Gastrocnemius medialis (tissue), 4 donors: ENCODE measurements at regions of chr1 and their contacts with region 1.

Region 1: GRCh38 chr1:86704458-86704971 is at the start of gene SH3GLB1:
- DNase-seq: peak; percentile 73 to 85
- ATAC-seq: peak; percentile 74 to 75
- H3K4me3 ChIP-seq: peak within 1 kb of the TSS; percentile 70 to 89 (median 83)
- H3K27ac ChIP-seq: peak within 1 kb of the TSS; percentile 91 to 98 (median 97)
- H3K4me1 ChIP-seq: peaks cover 37 to 39% of the 10 kb centered on the region in 2 donors
- H3K27me3 ChIP-seq: no peaks in the 10 kb centered on the region
- CTCF ChIP-seq: peak; percentile 91 to 99 (median 95)
- POLR2A ChIP-seq: peak; percentile 79
- total RNA-seq, gene SH3GLB1: 76.6 to 168 (median 112) TPM

Region 2: GRCh38 chr1:86714561-86715244 is 10.2 kb after region 1 on chr1:
- in situ Hi-C with region 1: no loop called
- intact Hi-C with region 1: loop called (anchors 2 kb)
- DNase-seq: no peak
- ATAC-seq: peak; percentile 68 to 69
- H3K4me3 ChIP-seq: peak overlapping the region in 3 of 4 donors; percentile 6 to 27 (median 20)
- H3K27ac ChIP-seq: peak overlapping the region; percentile 91 to 98 (median 97)
- H3K4me1 ChIP-seq: peaks cover 86 to 99% of the 10 kb centered on the region in 2 donors
- H3K27me3 ChIP-seq: no peaks in the 10 kb centered on the region
- CTCF ChIP-seq: no peak
- POLR2A ChIP-seq: no peak

Region 3: DNA sequence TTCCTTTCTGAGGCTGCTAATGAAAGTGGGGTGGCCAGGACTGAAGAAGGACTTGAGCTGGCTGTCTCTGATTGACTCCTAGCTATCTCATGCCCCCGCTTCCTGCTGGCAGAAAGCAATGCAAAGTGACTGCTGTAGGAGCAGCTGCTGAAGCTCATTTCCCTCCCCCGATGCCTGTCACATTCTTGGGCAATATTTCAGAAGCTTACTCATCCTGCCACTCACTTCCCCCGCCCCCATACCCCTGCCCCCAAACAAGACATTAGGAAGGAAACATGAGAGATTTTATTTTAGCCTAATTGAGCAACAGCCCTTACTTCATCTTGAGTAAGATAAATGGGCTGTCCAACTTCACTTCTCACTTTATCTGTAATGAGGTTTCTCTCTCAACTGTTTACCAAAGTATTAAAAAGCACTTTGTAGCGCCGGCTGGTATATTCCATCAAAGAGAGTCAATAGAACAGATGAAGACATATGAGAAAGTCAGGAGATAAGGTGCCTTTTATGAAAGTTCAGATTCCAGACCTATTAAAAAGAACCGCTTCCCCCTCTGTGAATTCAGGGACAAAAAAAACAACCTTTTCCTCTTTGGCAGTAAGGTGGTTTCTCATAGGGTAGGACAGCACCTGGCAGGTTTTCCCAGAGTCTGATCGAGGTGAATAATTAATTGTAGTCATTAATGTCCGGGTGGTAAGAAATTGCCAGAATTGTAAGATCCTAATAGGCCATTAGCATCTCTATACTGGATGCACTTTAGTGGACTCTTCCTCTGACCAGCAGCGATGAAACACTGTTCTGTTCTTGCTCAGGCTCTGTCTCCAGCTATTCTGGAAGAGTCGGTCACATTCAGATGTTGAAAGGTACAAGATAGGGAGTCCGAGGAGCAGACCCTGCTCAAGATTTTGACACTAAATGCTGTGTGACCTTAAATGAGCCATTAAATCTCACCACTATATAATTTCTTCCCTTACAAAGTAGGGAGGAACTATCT is 70.1 kb after region 1 on chr1:
- in situ Hi-C with region 1: no loop called
- intact Hi-C with region 1: loop called (anchors 2 kb)
- DNase-seq: peak; percentile 85 to 95
- ATAC-seq: peak; percentile 93 to 95
- H3K4me3 ChIP-seq: peak overlapping the region; percentile 2 to 31 (median 22)
- H3K27ac ChIP-seq: peak overlapping the region; percentile 86 to 94 (median 90)
- H3K4me1 ChIP-seq: peaks cover 32 to 44% of the 10 kb centered on the region in 2 donors
- H3K27me3 ChIP-seq: no peaks in the 10 kb centered on the region
- CTCF ChIP-seq: no peak
- POLR2A ChIP-seq: peak; percentile 53 to 70

Region 4: DNA sequence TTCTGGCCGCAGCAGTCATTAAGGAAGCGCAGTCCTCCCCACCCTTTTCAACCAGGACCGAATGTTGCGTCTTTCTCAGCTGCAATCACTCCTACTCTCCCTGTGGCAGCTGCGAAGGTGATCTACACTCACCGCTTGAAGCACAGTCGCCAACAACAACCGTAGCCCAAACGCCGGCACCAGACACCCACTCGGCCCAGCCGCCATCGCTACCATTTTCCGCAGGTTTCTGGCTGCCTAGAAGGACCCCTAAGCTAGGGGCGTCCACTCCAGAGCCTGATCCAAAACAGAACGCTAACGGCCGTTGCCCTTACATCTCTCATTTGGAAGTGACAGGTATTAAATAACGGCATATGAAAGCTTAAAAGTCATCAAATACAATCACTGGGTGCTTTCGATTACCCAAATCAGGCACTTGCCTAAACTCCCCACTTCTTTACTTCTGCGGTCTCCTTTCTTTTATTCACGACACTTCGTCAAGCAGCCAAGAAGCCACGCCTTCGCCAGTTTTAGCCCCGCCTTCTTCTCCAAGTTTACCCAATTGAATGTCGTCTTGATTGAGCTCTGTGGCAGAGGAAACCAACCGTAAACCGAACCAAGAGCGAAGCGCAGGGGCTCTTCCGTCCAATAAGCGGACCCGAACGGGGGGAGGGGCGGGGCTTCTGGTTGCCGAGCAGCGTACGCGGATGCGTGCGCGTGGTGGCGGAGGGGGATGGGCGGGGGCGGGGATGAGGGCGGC is 209.6 kb after region 1 on chr1 and contains the start of gene SELENOF:
- in situ Hi-C with region 1: loop called in 2 of 4 experiments (anchors 10 to 25 kb)
- intact Hi-C with region 1: loop called (anchors 1 kb)
- DNase-seq: peak; percentile 98 to 100
- ATAC-seq: peak; percentile 97 to 98
- H3K4me3 ChIP-seq: peak within 1 kb of the TSS; percentile 76 to 99 (median 88)
- H3K27ac ChIP-seq: peak within 1 kb of the TSS; percentile 86 to 97 (median 90)
- H3K4me1 ChIP-seq: peaks cover 19 to 40% of the 10 kb centered on the region in 2 donors
- H3K27me3 ChIP-seq: no peaks in the 10 kb centered on the region
- CTCF ChIP-seq: peak in 1 of 5 experiments; percentile 23
- POLR2A ChIP-seq: peak; percentile 18 to 86
- total RNA-seq, gene SELENOF: 41.3 to 66.8 (median 47.2) TPM

Region 5: DNA sequence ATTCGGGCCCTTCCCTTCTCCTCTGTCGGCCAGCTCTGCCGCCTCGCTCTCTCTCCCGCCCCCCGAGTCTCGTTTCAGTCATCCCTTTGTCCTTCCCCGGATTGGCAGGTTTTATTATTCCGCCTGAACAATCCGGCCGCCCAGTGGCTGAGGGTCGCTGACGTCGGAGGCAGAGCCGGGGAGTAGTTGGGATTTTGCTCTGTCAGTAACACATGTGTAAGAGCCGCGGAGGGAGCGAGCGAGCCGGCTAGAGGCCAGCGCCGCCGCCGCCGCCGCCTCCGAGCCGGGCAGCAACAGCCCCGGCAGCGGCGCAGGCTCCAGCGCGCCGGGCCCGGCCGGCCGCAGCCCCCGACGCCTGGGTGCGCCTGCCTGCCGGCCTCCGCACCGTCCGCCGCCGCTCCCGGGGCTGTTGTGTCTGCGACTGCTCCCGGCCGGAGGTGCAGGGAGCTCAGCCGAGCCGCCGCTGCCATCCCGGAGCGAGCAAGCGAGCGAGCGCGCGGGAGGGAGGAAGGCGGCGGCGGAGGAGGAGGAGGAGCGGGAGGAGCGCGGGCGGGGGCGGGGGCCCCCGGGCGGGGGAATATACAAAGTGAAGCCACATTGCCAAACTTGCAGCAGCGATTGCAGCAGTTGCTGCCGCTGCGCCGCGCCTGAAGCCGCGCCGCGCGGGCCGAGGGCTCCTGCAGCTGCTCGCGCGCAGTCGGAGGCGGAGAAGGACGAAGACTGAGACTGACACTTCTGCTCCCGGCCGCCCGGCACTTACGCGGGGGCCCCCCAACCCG is 623.9 kb after region 1 on chr1 and contains the start of gene LMO4:
- in situ Hi-C with region 1: loop called in 1 of 4 experiments (anchors 25 kb)
- intact Hi-C with region 1: loop called (anchors 10 kb)
- DNase-seq: peak; percentile 97
- ATAC-seq: peak; percentile 84 to 85
- H3K4me3 ChIP-seq: peak within 1 kb of the TSS; percentile 73 to 97 (median 92)
- H3K27ac ChIP-seq: peak within 1 kb of the TSS; percentile 88 to 99 (median 97)
- H3K4me1 ChIP-seq: peaks cover 23 to 24% of the 10 kb centered on the region in 2 donors
- H3K27me3 ChIP-seq: no peaks in the 10 kb centered on the region
- CTCF ChIP-seq: no peak
- POLR2A ChIP-seq: peak; percentile 89 to 94
- total RNA-seq, gene LMO4: 29.6 to 47.3 (median 35.8) TPM